CD8-positive, alpha-beta T cell (primary cell): ENCODE measurements at regions of chr12 and their contacts with region 1.

Region 1: DNA sequence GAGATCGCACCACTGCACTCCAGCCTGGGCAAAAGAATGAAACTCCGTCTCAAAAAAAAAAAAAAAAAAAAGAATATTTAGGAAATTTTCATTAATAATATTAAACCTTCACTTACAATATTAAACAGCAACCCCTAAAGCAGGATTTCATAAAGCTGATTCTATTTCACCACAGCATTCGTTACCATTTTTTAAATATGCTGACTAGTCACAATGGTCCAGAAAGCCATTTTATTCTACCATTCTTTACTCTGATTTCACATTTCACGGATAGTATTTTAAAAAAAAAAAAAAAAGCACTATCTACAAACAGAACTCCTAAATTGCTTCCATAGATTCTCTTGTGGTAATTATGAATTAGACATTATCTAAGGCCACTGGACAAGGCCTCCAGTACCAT is 27.6 kb downstream of the SARNP start:
- DNase-seq: no peak
- ATAC-seq: no peak
- H3K4me3 ChIP-seq: no peak overlapping the region
- H3K4me3 Mint-ChIP-seq: no peak overlapping the region
- H3K27ac ChIP-seq: no peak overlapping the region
- H3K27ac Mint-ChIP-seq: no peak overlapping the region
- H3K4me1 ChIP-seq: no peaks in the 10 kb centered on the region
- H3K4me1 Mint-ChIP-seq: peaks cover 4% of the 10 kb centered on the region
- H3K27me3 ChIP-seq: no peaks in the 10 kb centered on the region
- H3K27me3 Mint-ChIP-seq: no peaks in the 10 kb centered on the region
- CTCF ChIP-seq: no peak

Region 2: GRCh38 chr12:55495490-55495889 is 294.4 kb before region 1 on chr12:
- CTCF ChIA-PET with region 1: no interaction called
- POLR2A ChIA-PET with region 1: no interaction called
- intact Hi-C with region 1: no loop called
- DNase-seq: no peak
- ATAC-seq: no peak
- H3K4me3 ChIP-seq: no peak overlapping the region
- H3K4me3 Mint-ChIP-seq: no peak overlapping the region
- H3K27ac ChIP-seq: no peak overlapping the region
- H3K27ac Mint-ChIP-seq: no peak overlapping the region
- H3K4me1 ChIP-seq: no peaks in the 10 kb centered on the region
- H3K4me1 Mint-ChIP-seq: no peaks in the 10 kb centered on the region
- H3K27me3 ChIP-seq: no peaks in the 10 kb centered on the region
- H3K27me3 Mint-ChIP-seq: peaks cover 9% of the 10 kb centered on the region
- CTCF ChIP-seq: no peak

Region 3: GRCh38 chr12:55745361-55746146 is 44.3 kb before region 1 on chr12:
- CTCF ChIA-PET with region 1: interaction called, 51 read pairs
- POLR2A ChIA-PET with region 1: interaction called, 3 read pairs
- intact Hi-C with region 1: loop called (anchors 5 kb)
- DNase-seq: no peak
- ATAC-seq: no peak
- H3K4me3 ChIP-seq: no peak overlapping the region
- H3K4me3 Mint-ChIP-seq: peak overlapping the region; percentile 92
- H3K27ac ChIP-seq: no peak overlapping the region
- H3K27ac Mint-ChIP-seq: peak overlapping the region; percentile 71
- H3K4me1 ChIP-seq: peaks cover 28% of the 10 kb centered on the region
- H3K4me1 Mint-ChIP-seq: peaks cover 30% of the 10 kb centered on the region
- H3K27me3 ChIP-seq: no peaks in the 10 kb centered on the region
- H3K27me3 Mint-ChIP-seq: no peaks in the 10 kb centered on the region
- CTCF ChIP-seq: no peak